BJ (cell line): ENCODE measurements at regions of chr1 and their contacts with region 1.

Region 1: GRCh38 chr1:89005286-89006151 is 13.1 kb upstream of the KYAT3 start:
- DNase-seq: no peak
- H3K4me3 ChIP-seq: no peak overlapping the region
- H3K27me3 ChIP-seq: no peaks in the 10 kb centered on the region
- CTCF ChIP-seq: no peak

Region 2: DNA sequence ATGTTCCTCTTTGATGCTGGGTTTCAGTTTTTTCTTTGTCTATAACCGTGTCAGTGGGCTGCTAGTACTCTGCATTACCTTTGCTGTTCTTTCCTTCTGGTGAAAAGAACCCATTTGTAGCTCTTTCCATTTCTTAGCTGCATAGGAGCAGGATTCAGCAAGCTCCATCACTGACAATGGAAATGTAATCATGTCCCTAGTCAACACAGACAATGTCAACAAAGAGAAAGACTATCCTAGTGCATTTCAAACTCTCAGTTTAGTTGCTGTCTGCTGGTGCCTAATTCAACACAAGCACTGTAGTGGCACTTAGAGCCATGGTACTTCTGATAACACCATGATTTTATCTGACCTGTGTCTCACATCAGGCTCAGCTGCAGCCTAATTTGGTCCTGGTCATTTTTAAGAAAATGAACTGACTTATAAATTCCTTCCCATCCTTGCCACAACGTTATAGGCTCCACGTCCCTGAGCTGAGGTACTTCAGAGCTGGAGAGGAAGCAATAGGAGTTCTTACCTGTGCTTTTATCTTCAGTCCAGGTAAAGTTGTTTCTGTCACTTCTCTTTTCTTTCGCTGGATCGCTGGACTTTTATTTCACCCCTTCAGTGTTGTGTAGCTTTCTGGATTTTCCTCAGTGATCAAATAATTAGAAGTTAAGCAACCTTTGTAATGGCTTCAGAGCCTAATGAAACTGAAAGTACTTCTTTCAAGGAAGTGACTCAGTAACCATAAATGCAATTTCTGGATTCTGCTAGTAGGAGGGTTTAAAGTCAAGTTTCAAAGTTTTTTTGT is 16.8 kb after region 1 on chr1 and contains the start of gene GBP3:
- CTCF ChIA-PET with region 1: interaction called, 5 read pairs
- POLR2A ChIA-PET with region 1: interaction called, 22 read pairs
- DNase-seq: no peak
- H3K4me3 ChIP-seq: peak within 1 kb of the TSS; percentile 76
- H3K27me3 ChIP-seq: no peaks in the 10 kb centered on the region
- CTCF ChIP-seq: no peak
- polyA plus RNA-seq, gene GBP3: 55.4 and 81.0 TPM in 2 replicates